PC-3 (cell line): ENCODE measurements at regions of chr6 and their contacts with region 1.

Region 1: GRCh38 chr6:127547215-127547614 is 28.1 kb upstream of the MTCL3 start:
- DNase-seq: peak; percentile 5
- ATAC-seq: no peak
- H3K4me3 ChIP-seq: no peak overlapping the region
- H3K27ac ChIP-seq: no peak overlapping the region
- H3K4me1 ChIP-seq: no peaks in the 10 kb centered on the region
- H3K27me3 ChIP-seq: no peaks in the 10 kb centered on the region
- CTCF ChIP-seq: peak; percentile 34; the same call in 1 of the 2 replicates

Region 2: DNA sequence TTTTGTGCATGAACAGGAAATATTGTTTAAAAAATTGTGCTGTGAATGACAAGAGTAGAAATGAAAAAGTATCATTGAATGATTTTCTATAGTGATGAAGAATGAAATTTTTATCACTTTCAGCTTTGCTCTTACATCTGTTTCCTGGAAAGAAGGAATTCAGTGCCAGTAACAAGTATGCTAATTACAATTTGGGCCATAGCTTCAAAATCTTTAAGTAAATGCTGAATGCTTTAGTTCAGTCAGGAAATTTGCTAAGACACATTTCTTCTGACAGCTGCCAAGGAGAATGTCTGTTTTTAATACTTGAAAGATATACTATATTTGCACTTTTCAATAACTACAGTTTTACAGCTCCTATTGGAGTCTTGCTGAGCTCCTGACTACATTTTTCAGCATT is 632.4 kb before region 1 on chr6:
- CTCF ChIA-PET with region 1: no interaction called
- POLR2A ChIA-PET with region 1: no interaction called
- intact Hi-C with region 1: no loop called
- DNase-seq: no peak
- ATAC-seq: no peak
- H3K4me3 ChIP-seq: no peak overlapping the region
- H3K27ac ChIP-seq: no peak overlapping the region
- H3K4me1 ChIP-seq: no peaks in the 10 kb centered on the region
- H3K27me3 ChIP-seq: no peaks in the 10 kb centered on the region
- CTCF ChIP-seq: no peak

Region 3: GRCh38 chr6:127190552-127190951 is 356.7 kb before region 1 on chr6:
- CTCF ChIA-PET with region 1: no interaction called
- POLR2A ChIA-PET with region 1: no interaction called
- intact Hi-C with region 1: loop called (anchors 10 kb)
- DNase-seq: peak; percentile 41
- ATAC-seq: peak; percentile 53; the same call in 1 of the 2 replicates
- H3K4me3 ChIP-seq: no peak overlapping the region
- H3K27ac ChIP-seq: no peak overlapping the region
- H3K4me1 ChIP-seq: no peaks in the 10 kb centered on the region
- H3K27me3 ChIP-seq: no peaks in the 10 kb centered on the region
- CTCF ChIP-seq: peak; percentile 60

Region 4: DNA sequence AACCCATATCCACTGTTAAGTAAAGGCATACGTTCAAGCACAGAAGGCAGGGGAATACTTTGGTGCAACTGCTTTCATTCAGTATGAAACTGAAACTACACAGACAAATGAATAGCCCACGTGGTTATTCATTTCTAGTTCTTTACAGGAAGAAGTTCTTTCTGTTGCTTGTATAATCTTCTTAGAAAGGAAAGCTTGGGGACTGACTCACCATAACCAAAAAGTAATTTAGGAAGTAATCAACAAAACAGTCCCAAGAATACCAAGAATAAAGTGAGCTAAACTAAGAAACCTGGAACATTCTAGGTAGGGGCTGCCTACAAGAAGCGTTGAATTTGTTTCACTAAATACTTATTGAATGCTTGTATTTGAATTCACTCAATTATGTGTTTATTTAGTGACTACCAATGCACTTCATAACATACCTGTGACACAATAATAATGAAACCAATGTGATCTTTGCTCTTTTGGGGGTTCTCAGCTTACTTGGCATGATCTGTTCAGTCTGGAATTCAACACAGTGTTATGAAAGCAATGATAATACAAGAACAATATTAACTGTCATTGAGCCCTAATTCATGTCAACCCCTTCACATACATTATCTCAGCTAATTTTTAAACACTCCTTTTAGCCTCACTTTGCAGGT is 62.9 kb before region 1 on chr6:
- CTCF ChIA-PET with region 1: no interaction called
- POLR2A ChIA-PET with region 1: no interaction called
- intact Hi-C with region 1: no loop called
- DNase-seq: peak; percentile 75
- ATAC-seq: peak; percentile 59
- H3K4me3 ChIP-seq: peak overlapping the region; percentile 50
- H3K27ac ChIP-seq: peak overlapping the region; percentile 69
- H3K4me1 ChIP-seq: peaks cover 53% of the 10 kb centered on the region
- H3K27me3 ChIP-seq: no peaks in the 10 kb centered on the region
- CTCF ChIP-seq: no peak

Region 5: DNA sequence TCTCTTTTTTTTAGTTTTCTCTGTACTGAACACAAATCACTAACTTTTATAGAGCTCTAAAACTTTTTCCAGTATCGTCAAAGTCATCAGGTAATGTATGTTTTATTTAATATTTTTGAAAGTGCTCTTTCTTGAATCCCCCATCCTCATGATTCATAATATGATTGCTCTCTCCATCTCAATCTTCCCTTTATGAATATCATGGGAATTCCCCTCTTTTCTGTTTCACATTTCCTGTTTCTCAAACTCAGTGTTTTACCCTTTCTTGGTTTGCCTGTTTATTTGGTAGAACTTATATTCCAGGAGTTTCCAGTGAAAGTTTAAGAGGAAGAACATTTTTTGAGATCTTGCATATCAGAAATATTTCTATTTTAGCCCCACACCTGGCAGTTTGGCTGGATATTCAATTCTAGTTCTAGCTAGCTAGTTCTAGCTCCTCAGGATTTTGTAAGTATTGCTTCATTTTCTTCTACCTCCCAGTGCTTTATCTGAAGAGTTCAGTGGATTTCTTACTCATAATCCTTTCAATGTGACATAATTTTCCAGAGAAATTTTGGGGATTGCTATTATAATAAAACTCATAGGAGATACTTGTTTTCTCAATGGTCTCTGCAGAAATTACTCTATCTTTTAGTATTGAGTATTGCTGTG is 23.6 kb after region 1 on chr6:
- CTCF ChIA-PET with region 1: no interaction called
- POLR2A ChIA-PET with region 1: no interaction called
- intact Hi-C with region 1: no loop called
- DNase-seq: no peak
- ATAC-seq: no peak
- H3K4me3 ChIP-seq: no peak overlapping the region
- H3K27ac ChIP-seq: no peak overlapping the region
- H3K4me1 ChIP-seq: no peaks in the 10 kb centered on the region
- H3K27me3 ChIP-seq: no peaks in the 10 kb centered on the region
- CTCF ChIP-seq: no peak